Right lobe of liver (tissue), 6 donors: ENCODE measurements at regions of chr9 and their contacts with region 1.

Region 1: GRCh38 chr9:131334629-131335367 is 45.3 kb downstream of the PLPP7 start:
- DNase-seq: peak in 1 of 3 donors; percentile 39
- ATAC-seq: peak in 3 of 4 donors; percentile 16 to 25 (median 21)
- H3K4me3 ChIP-seq: no peak overlapping the region
- H3K27ac ChIP-seq: no peak overlapping the region
- H3K4me1 ChIP-seq: no peaks in the 10 kb centered on the region
- H3K27me3 ChIP-seq: no peaks in the 10 kb centered on the region
- CTCF ChIP-seq: no peak
- POLR2A ChIP-seq: no peak

Region 2: GRCh38 chr9:131056781-131057506 is 277.9 kb before region 1 on chr9:
- intact Hi-C with region 1: loop called in 1 of 2 experiments (anchors 5 kb)
- DNase-seq: no peak
- ATAC-seq: no peak
- H3K4me3 ChIP-seq: no peak overlapping the region
- H3K27ac ChIP-seq: no peak overlapping the region
- H3K4me1 ChIP-seq: no peaks in the 10 kb centered on the region
- H3K27me3 ChIP-seq: no peaks in the 10 kb centered on the region
- CTCF ChIP-seq: no peak
- POLR2A ChIP-seq: no peak

Region 3: GRCh38 chr9:131125128-131126058 is 209.4 kb before region 1 on chr9 and contains the start of gene NUP214:
- intact Hi-C with region 1: no loop called
- DNase-seq: peak; percentile 99
- ATAC-seq: peak; percentile 98 to 99 (median 98)
- H3K4me3 ChIP-seq: peak within 1 kb of the TSS; percentile 86 to 94 (median 93)
- H3K27ac ChIP-seq: peak within 1 kb of the TSS; percentile 57 to 75 (median 72)
- H3K4me1 ChIP-seq: peaks cover 0 to 17% (median 4%) of the 10 kb centered on the region in 4 donors
- H3K27me3 ChIP-seq: no peaks in the 10 kb centered on the region
- CTCF ChIP-seq: no peak
- POLR2A ChIP-seq: peak; percentile 78
- total RNA-seq, gene NUP214: 22.5 to 31.1 (median 27.5) TPM

Region 4: DNA sequence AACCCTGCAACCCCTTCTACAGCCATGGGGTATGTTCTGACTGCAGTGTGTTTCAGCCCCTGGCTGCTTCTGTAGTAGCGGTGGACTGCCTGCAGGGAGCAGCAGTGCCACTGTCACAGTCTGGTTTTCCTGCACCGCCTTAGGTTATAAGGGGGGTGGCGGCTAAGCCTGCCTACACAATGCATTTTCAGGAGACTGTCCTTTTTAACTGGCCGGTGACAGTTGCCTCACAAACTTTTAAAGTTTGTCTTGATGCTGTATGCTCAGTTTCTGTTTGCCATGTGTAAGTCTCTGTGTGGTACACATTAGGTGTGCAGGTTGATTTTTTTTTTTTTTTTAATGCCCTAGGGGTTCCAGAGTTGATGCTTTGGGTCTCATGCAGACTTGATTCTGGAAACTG is 156.4 kb before region 1 on chr9:
- intact Hi-C with region 1: loop called (anchors 5 to 10 kb)
- DNase-seq: peak; percentile 56 to 68 (median 60)
- ATAC-seq: peak; percentile 95 to 97 (median 96)
- H3K4me3 ChIP-seq: no peak overlapping the region
- H3K27ac ChIP-seq: no peak overlapping the region
- H3K4me1 ChIP-seq: no peaks in the 10 kb centered on the region
- H3K27me3 ChIP-seq: no peaks in the 10 kb centered on the region
- CTCF ChIP-seq: peak; percentile 79 to 90 (median 86)
- POLR2A ChIP-seq: no peak